ENCODE measurements at regions of chr1 and their contacts with region 1.

Region 1: DNA sequence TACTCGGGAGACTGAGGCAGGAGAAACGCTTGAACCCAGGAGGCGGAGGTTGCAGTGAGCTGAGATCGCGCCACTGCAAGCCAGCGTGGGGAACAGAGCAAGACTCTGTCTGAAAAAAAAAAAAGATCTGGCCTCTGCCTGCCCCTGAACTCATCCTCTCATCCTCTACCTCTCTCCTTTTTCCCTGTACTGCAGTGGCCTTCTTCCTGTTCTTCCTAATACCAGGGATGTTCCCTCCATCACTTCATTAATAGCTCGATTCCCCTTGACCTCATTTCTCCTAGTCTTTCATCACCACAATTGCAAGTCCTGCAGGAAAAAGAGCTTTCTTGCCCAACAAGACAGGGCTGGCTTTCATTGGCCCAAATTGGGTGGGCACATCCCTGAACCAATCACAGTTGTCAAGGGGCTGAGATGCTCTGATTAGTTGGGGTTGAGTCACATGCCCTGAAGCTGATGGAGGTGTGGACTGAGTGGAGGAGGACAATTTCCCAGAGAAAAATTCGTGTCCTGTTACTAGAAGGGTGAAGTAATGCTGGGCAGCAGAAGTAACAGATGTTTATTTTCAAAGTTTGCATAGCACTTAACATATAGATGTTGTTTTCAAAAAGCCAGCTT is 86.8 kb upstream of the PUM1 start:
- DNase-seq: no peak
- H3K4me3 ChIP-seq: no peak overlapping the region
- H3K27ac ChIP-seq: no peak overlapping the region
- H3K4me1 ChIP-seq: no peaks in the 10 kb centered on the region
- H3K27me3 ChIP-seq: no peaks in the 10 kb centered on the region
- CTCF ChIP-seq: no peak
- EP300 ChIP-seq: no peak
- RAD21 ChIP-seq: no peak

Region 2: DNA sequence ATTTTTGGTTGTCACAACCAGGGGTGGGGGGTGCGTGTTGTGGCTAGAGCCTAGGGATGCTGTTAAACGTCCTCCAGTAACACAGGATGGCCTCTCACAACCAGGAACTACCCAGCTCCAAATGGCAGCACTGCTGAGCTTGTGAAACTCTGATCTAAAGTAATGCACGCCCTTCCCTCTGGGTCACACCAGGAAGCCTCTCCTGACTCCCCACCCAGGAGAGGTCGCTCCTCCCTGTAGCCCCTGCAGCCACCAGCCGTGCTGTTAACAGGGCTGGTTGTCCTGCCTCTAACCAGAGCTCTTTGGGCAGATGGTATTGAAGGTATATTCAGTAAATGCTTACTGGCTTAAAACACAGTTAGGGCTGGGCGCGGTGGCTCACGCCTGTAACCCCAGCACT is 14.2 kb after region 1 on chr1:
- CTCF ChIA-PET with region 1: interaction called, 13 read pairs
- POLR2A ChIA-PET with region 1: no interaction called
- DNase-seq: no peak
- H3K4me3 ChIP-seq: no peak overlapping the region
- H3K27ac ChIP-seq: no peak overlapping the region
- H3K4me1 ChIP-seq: peaks cover 3 to 8% of the 10 kb centered on the region in 2 experiments; a peak in 2 of 4 replicates
- H3K27me3 ChIP-seq: no peaks in the 10 kb centered on the region
- CTCF ChIP-seq: no peak
- EP300 ChIP-seq: no peak
- RAD21 ChIP-seq: no peak

Region 3: GRCh38 chr1:31227891-31228568 is 75.7 kb after region 1 on chr1:
- CTCF ChIA-PET with region 1: no interaction called
- POLR2A ChIA-PET with region 1: no interaction called
- DNase-seq: peak; percentile 79
- H3K4me3 ChIP-seq: no peak overlapping the region
- H3K27ac ChIP-seq: peak overlapping the region in 1 of 2 experiments; percentile 18; a peak in 1 of 4 replicates
- H3K4me1 ChIP-seq: peaks cover 0 to 26% of the 10 kb centered on the region in 2 experiments; a peak in 1 of 4 replicates
- H3K27me3 ChIP-seq: peaks cover 5% of the 10 kb centered on the region; the same call in 1 of the 2 replicates
- CTCF ChIP-seq: no peak
- EP300 ChIP-seq: peak in 1 of 2 experiments; percentile 44; a peak in 1 of 4 replicates
- RAD21 ChIP-seq: no peak

Region 4: DNA sequence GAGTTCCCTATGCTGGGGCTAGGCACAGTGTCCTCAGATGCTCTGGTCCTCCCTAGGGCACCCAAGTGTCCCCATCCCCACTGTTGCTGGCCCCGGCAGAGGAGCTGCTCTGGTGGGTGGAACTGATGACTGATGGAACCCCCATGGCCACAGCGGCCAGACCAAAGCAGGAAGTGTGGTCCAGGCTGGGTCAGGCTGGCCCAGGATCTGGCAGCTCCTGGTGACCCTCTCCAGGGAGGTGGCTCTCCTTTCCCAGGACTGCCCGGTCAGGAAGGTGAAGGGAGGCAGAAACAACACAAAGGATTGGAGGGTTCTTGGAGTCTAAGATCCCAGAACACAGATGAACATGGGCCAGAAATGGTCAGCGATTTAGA is 86.3 kb after region 1 on chr1:
- CTCF ChIA-PET with region 1: no interaction called
- POLR2A ChIA-PET with region 1: no interaction called
- DNase-seq: peak; percentile 54
- H3K4me3 ChIP-seq: peak overlapping the region in 1 of 2 experiments; percentile 46; a peak in 2 of 4 replicates
- H3K27ac ChIP-seq: peak overlapping the region in 1 of 2 experiments; percentile 29; a peak in 1 of 4 replicates
- H3K4me1 ChIP-seq: peaks cover 0 to 16% of the 10 kb centered on the region in 2 experiments; a peak in 1 of 4 replicates
- H3K27me3 ChIP-seq: peaks cover 34% of the 10 kb centered on the region
- CTCF ChIP-seq: no peak
- EP300 ChIP-seq: no peak
- RAD21 ChIP-seq: no peak